Activated naive CD4-positive, alpha-beta T cell treated with anti-CD3 and anti-CD28 coated beads for 36 hours (primary cell): ENCODE measurements at regions of chr10 and their contacts with region 1.

Region 1: GRCh38 chr10:101708073-101708472 is 13.1 kb upstream of the FBXW4 start:
- DNase-seq: no peak
- H3K4me3 Mint-ChIP-seq: no peak overlapping the region
- H3K27ac Mint-ChIP-seq: no peak overlapping the region
- H3K4me1 Mint-ChIP-seq: peaks cover 20% of the 10 kb centered on the region
- H3K27me3 Mint-ChIP-seq: peaks cover 46% of the 10 kb centered on the region

Region 2: GRCh38 chr10:101671453-101671852 is 36.6 kb before region 1 on chr10:
- CTCF ChIA-PET with region 1: no interaction called
- intact Hi-C with region 1: no loop called
- DNase-seq: no peak
- H3K4me3 Mint-ChIP-seq: no peak overlapping the region
- H3K27ac Mint-ChIP-seq: no peak overlapping the region
- H3K4me1 Mint-ChIP-seq: peaks cover 7% of the 10 kb centered on the region
- H3K27me3 Mint-ChIP-seq: no peaks in the 10 kb centered on the region

Region 3: GRCh38 chr10:101693978-101694673 is 13.9 kb before region 1 on chr10:
- CTCF ChIA-PET with region 1: interaction called, 3 read pairs
- intact Hi-C with region 1: loop called (anchors 1 kb)
- DNase-seq: peak; percentile 56
- H3K4me3 Mint-ChIP-seq: peak overlapping the region; percentile 97
- H3K27ac Mint-ChIP-seq: peak overlapping the region; percentile 97
- H3K4me1 Mint-ChIP-seq: peaks cover 38% of the 10 kb centered on the region
- H3K27me3 Mint-ChIP-seq: no peaks in the 10 kb centered on the region